HepG2 (cell line): ENCODE measurements at regions of chr11 and their contacts with region 1.

Region 1: DNA sequence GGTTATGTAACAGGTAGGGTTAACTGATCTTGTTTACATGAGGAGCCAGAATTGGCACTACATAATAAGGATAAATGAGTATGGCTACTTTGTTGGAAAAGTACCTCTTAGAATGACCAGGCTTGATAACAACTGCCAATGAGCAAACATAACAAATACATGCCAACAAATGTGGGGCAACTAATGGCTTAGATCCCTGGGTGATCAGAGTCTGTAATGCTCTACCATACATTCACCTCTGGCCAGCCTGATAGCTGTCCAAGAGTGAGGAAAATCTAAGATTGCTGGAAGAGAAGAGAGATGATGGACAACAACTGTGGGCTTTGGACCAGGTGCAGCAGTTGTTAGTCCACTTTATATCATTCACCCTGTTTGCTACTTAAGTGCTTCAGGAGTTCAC is 1025.0 kb downstream of the NTM start:
- DNase-seq: no peak
- ATAC-seq: no peak
- H3K4me3 ChIP-seq: no peak overlapping the region
- H3K27ac ChIP-seq: no peak overlapping the region
- H3K4me1 ChIP-seq: no peaks in the 10 kb centered on the region
- H3K27me3 ChIP-seq: no peaks in the 10 kb centered on the region
- CTCF ChIP-seq: no peak
- EP300 ChIP-seq: no peak
- POLR2A ChIP-seq: no peak
- RAD21 ChIP-seq: no peak

Region 2: DNA sequence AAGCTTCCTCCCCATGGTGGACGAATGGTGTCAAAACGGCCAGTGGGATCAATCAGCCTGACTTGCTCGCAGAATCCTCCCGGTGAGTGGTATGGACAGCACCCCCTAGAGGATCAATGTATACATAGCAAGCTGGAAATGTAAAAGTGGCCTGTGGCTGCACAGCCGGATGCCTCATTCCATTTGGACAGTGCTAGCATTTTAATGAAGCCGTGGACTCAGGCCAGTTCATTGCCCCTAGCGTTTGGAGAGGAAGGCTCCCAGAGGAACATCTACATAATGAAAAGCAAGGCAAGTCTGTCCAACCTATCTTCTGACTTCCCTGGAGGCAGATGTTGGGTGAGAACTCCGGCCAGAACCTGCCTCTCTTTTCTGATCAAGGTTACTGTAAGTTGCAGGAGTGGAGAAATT is 82.7 kb before region 1 on chr11:
- CTCF ChIA-PET with region 1: no interaction called
- POLR2A ChIA-PET with region 1: no interaction called
- in situ Hi-C with region 1: no loop called
- intact Hi-C with region 1: loop called (anchors 2 kb)
- DNase-seq: no peak
- ATAC-seq: peak; percentile 54; the same call in 2 of the 3 replicates
- H3K4me3 ChIP-seq: no peak overlapping the region
- H3K27ac ChIP-seq: no peak overlapping the region
- H3K4me1 ChIP-seq: no peaks in the 10 kb centered on the region
- H3K27me3 ChIP-seq: no peaks in the 10 kb centered on the region; a peak in 1 of 5 replicates
- CTCF ChIP-seq: peak; percentile 46
- EP300 ChIP-seq: no peak
- POLR2A ChIP-seq: no peak
- RAD21 ChIP-seq: no peak